ENCODE measurements at regions of chr22 and their contacts with region 1.

Region 1: GRCh38 chr22:45577746-45578523 is 75.3 kb downstream of the FBLN1 start:
- DNase-seq: peak; percentile 86
- H3K4me3 ChIP-seq: no peak overlapping the region
- H3K27ac ChIP-seq: no peak overlapping the region
- H3K4me1 ChIP-seq: no peaks in the 10 kb centered on the region
- H3K27me3 ChIP-seq: no peaks in the 10 kb centered on the region
- CTCF ChIP-seq: peak; percentile 86 to 97 (median 96)
- POLR2A ChIP-seq: no peak

Region 2: GRCh38 chr22:44765571-44766285 is 812.2 kb before region 1 on chr22:
- intact Hi-C with region 1: no loop called
- DNase-seq: no peak
- H3K4me3 ChIP-seq: no peak overlapping the region
- H3K27ac ChIP-seq: no peak overlapping the region
- H3K4me1 ChIP-seq: peaks cover 3% of the 10 kb centered on the region
- H3K27me3 ChIP-seq: no peaks in the 10 kb centered on the region
- CTCF ChIP-seq: no peak
- POLR2A ChIP-seq: no peak

Region 3: DNA sequence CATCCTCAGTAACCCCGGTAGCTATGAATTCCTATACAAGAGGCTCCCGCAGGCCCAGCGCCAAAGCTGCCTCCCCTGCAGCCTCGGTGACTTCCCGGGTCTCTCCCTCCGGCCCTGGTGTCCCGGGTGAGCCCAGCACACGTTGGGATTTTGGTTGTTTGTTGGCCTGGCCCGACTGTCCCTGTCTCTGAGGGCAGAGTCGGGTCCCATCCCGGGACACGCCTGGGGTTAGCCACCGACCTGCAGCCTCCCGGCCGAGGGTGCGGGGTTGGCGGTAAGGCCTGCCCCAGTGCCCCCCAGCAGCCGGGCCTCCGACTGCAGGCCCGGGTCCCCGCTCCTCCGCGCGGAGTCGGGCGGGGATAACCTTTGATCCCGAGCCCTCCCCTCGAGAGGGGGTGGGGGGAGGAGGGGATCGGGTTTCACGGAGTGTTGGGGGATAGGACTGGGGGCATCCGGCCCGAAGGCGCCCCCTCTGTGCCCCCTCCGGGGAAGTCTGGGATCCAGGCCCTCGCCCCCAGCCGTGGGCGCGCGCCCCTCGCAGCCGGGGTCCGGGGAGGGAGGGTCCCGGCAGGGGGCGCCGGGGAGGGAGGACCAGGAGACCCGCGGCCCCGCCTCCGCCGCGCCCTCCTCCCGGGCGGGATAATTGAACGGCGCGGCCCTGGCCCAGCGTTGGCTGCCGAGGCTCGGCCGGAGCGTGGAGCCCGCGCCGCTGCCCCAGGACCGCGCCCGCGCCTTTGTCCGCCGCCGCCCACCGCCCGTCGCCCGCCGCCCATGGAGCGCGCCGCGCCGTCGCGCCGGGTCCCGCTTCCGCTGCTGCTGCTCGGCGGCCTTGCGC is 75.5 kb before region 1 on chr22 and contains the start of gene FBLN1:
- intact Hi-C with region 1: no loop called
- DNase-seq: no peak
- H3K4me3 ChIP-seq: peak within 1 kb of the TSS; percentile 46 to 48
- H3K27ac ChIP-seq: peak within 1 kb of the TSS; percentile 67 to 74
- H3K4me1 ChIP-seq: no peaks in the 10 kb centered on the region
- H3K27me3 ChIP-seq: peaks cover 2% of the 10 kb centered on the region
- CTCF ChIP-seq: peak in 1 of 4 experiments; percentile 39
- POLR2A ChIP-seq: no peak
- total RNA-seq, gene FBLN1: 125 to 144 TPM

Region 4: DNA sequence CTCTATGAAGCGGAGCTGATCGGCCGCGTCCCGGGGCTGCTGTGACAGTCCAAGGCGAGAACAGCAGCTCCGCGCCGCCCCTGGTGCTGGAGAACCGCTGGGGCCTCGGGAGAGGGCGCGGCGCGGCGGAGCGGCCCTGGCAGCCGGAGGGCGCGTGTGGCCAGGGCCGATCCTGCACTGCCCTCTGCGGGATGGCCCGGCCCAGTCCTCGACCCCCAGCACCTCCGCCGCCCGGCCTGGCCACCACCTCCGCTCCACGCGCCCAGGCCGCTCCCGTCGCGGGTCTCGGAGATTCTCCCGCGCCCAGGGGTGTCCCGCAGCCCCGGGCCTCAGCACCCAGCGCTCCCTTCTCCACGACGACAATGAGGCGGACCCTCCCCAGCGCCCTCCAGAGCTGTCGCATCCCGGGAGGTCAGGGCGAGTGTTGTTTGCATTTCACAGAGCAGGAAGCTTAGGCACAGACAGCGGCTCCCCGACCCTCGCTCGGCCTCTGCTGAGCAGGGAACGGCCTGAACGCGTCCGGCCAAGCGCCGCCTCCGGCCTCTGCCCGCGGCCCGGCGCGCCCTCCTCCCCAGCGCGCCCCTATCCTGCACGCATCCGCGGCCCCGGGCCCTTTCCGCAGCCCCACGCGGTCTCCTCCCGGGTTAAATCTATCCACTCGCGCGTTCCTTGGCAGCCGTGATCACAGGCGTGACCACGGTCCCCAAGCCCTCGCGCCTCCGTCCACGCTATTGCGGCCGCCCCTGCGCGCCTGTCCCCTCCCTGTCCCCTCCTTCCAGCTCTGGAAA is 289.4 kb after region 1 on chr22:
- intact Hi-C with region 1: loop called (anchors 5 kb)
- DNase-seq: no peak
- H3K4me3 ChIP-seq: peak overlapping the region; percentile 0 to 16
- H3K27ac ChIP-seq: no peak overlapping the region
- H3K4me1 ChIP-seq: peaks cover 11% of the 10 kb centered on the region
- H3K27me3 ChIP-seq: peaks cover 6% of the 10 kb centered on the region
- CTCF ChIP-seq: peak in 3 of 4 experiments; percentile 36 to 66 (median 58)
- POLR2A ChIP-seq: no peak